Activated T-helper 1 cell treated with anti-CD3 and anti-CD28 coated beads, Interleukin-12 subunit alpha, Interleukin-12 subunit beta, Interleukin-2, Interleukin-4 antibody, amounts not matched to agents 30 ng/mL and 10 ng/mL and 1 ng/mL, durations not matched to agents 14 hours and 24 hours and 36 hours (primary cell): ENCODE measurements at regions of chr5 and their contacts with region 1.

Region 1: GRCh38 chr5:14809369-14810155 is 62.0 kb downstream of the ANKH start:
- DNase-seq: peak; percentile 74
- H3K4me3 Mint-ChIP-seq: peak overlapping the region; percentile 80
- H3K27ac Mint-ChIP-seq: peak overlapping the region; percentile 88
- H3K4me1 Mint-ChIP-seq: peaks cover 37% of the 10 kb centered on the region
- H3K27me3 Mint-ChIP-seq: no peaks in the 10 kb centered on the region

Region 2: DNA sequence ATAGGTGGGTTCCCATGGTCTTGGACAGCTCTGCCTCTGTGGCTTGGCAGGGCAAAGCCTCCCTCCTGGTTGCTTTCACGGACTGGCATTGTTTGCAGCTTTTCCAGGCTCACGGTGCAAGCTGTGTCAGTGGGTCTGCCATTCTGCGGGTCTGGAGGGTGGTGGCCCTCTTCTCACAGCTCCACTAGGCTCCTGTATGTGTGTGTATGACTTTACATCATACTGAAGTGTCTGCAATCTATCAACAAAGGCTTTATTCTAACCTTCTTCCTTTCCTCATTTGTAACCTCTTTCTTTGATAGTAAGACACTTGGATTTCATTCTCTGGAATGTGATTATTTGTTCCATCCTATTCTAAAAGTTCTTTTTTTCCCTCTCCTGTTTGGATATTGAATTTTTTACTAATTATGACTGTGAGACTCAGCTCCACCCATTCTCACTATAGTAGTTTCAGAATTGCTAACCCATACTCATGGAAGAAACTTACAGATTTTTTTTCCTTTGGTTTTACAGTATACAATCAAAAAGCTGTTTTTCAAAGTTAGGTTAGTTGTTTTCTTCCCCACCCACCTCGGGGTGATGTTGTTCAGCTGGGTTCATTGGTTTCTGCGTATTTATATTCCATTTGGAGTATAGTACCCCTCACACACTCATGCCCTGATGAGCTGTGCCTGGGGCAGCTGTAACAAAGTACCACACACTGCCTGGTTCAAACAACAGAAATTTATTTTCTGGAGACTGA is 372.6 kb before region 1 on chr5:
- intact Hi-C with region 1: loop called (anchors 1 kb)
- DNase-seq: no peak
- H3K4me3 Mint-ChIP-seq: no peak overlapping the region
- H3K27ac Mint-ChIP-seq: peak overlapping the region; percentile 49
- H3K4me1 Mint-ChIP-seq: peaks cover 22% of the 10 kb centered on the region
- H3K27me3 Mint-ChIP-seq: peaks cover 6% of the 10 kb centered on the region

Region 3: DNA sequence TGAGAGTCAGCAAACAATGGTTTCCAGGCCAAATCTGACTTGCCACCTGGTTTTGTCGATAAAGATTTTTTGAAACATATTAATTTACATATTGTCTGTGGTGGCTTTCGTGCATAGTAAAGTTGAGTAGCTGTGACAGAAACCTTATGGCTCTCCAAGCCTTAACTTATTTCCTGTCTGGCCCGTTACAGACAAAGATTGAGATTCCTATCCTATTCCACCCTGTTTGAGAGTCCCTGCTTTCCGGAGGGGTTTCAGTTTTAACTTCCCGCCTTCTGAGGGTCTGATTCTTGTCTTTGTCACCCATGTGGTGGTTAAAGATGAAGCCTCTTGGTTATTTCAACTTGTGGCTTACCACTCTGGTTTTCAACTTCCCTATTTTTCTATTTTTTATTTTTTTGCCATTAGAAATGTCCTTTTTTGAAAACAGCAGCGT is 133.7 kb before region 1 on chr5:
- intact Hi-C with region 1: loop called (anchors 2 kb)
- DNase-seq: no peak
- H3K4me3 Mint-ChIP-seq: peak overlapping the region; percentile 46
- H3K27ac Mint-ChIP-seq: peak overlapping the region; percentile 82
- H3K4me1 Mint-ChIP-seq: peaks cover 69% of the 10 kb centered on the region
- H3K27me3 Mint-ChIP-seq: no peaks in the 10 kb centered on the region

Region 4: DNA sequence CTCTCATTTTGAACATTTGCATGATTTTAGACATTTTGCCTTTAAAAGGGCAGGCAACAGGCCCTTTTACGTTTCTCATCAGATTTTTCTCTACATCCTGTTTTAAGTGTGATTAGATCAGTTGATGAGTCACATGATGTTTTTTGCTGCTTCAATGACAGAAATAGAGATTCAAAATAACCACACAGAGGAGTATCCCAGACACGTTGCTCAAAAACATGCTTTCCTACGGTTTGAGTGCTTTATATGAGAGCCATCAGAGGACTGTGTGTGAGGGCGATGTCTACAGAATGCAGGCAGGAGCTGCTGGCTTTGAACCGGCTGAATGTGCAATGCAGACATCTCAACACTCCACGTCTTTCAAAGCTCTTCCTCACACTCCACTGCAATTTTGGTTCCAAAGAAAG is 102.9 kb before region 1 on chr5:
- intact Hi-C with region 1: loop called (anchors 1 kb)
- DNase-seq: peak; percentile 48
- H3K4me3 Mint-ChIP-seq: peak overlapping the region; percentile 87
- H3K27ac Mint-ChIP-seq: peak overlapping the region; percentile 99
- H3K4me1 Mint-ChIP-seq: peaks cover 75% of the 10 kb centered on the region
- H3K27me3 Mint-ChIP-seq: no peaks in the 10 kb centered on the region

Region 5: GRCh38 chr5:14871210-14872069 is 61.9 kb after region 1 on chr5 and contains the start of gene ANKH:
- intact Hi-C with region 1: loop called (anchors 1 kb)
- DNase-seq: peak; percentile 81
- H3K4me3 Mint-ChIP-seq: peak within 1 kb of the TSS; percentile 97
- H3K27ac Mint-ChIP-seq: peak within 1 kb of the TSS; percentile 94
- H3K4me1 Mint-ChIP-seq: peaks cover 24% of the 10 kb centered on the region
- H3K27me3 Mint-ChIP-seq: peaks cover 19% of the 10 kb centered on the region
- total RNA-seq, gene ANKH: 34.2 and 35.6 TPM in 2 replicates

Region 6: DNA sequence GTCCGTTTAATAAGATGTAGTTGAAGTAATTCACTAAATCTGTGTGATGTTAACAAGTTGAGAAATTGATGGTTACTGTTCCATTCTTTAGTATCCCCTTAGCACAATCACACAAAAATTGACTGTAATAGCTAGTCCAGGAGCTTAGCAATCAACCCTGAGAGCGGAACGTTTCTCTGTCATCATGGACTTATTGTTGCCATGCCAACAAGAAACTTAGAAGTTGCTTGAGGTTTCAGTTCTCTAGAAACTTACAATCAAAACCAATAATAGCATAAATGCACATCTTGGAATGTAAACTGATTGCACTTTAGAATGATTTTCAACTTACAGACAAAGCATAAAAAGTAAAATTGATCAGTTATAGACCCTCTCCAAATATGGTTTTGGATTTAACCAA is 187.4 kb after region 1 on chr5:
- intact Hi-C with region 1: loop called (anchors 2 kb)
- DNase-seq: no peak
- H3K4me3 Mint-ChIP-seq: no peak overlapping the region
- H3K27ac Mint-ChIP-seq: no peak overlapping the region
- H3K4me1 Mint-ChIP-seq: peaks cover 38% of the 10 kb centered on the region
- H3K27me3 Mint-ChIP-seq: peaks cover 2% of the 10 kb centered on the region

Region 7: DNA sequence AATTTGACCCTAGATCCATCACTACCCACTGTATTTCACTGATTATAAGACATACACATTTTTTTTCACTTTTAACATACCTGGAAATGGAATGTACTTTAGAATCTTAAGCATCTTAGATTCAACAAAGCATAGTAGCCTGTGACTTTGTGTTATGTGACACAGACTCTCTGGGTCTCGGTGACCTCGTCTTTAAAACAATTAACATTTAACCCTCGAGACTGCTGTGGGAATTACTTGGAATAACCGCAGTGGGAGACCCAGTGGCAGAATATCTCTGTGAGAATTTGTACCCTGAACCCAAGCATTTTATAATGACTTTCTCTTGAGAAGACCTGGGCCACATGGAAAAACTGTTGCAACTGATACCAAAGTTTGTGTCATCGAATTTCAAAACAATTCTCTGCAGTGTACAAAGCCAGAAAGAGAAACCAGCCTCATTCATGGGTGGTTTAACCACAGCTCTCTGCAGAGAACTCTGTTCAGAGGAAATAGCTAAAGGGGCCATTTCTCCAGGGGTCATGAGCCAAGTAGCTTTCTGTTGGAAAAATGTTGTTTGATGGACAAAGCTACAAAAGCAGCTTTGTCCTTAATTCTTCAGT is 1817.2 kb after region 1 on chr5:
- intact Hi-C with region 1: loop called (anchors 10 kb)
- DNase-seq: peak; percentile 43
- H3K4me3 Mint-ChIP-seq: peak overlapping the region; percentile 28
- H3K27ac Mint-ChIP-seq: peak overlapping the region; percentile 45
- H3K4me1 Mint-ChIP-seq: peaks cover 43% of the 10 kb centered on the region
- H3K27me3 Mint-ChIP-seq: no peaks in the 10 kb centered on the region